ENCODE measurements at regions of chr1 and their contacts with region 1.

Region 1: DNA sequence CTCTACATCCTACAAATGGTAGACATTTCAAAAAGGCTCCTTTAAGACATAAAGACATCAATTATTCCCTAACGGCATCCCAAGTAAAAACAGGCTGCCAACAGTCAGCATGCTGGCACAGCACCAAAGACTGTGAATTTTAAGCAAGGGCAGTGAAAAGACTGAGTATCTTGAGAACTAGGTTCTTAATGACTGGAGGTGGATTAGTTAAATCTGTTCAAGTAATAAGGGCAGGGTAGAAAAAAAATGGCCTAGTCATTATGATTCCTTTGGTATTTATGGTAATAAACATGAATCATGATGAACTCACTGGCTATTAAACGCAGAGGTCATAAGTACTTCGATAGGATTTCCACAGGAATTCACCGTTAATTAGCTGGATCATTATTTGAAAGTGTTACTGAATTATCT is 75.2 kb downstream of the KIFAP3 start:
- DNase-seq: peak in 1 of 2 experiments; percentile 65
- H3K4me3 ChIP-seq: no peak overlapping the region
- H3K27ac ChIP-seq: peak overlapping the region; percentile 40
- H3K4me1 ChIP-seq: peaks cover 9% of the 10 kb centered on the region
- H3K27me3 ChIP-seq: no peaks in the 10 kb centered on the region
- CTCF ChIP-seq: no peak

Region 2: GRCh38 chr1:170020859-170021258 is 21.5 kb after region 1 on chr1:
- CTCF ChIA-PET with region 1: no interaction called
- POLR2A ChIA-PET with region 1: no interaction called
- intact Hi-C with region 1: no loop called
- DNase-seq: no peak
- H3K4me3 ChIP-seq: no peak overlapping the region
- H3K27ac ChIP-seq: no peak overlapping the region
- H3K4me1 ChIP-seq: no peaks in the 10 kb centered on the region
- H3K27me3 ChIP-seq: no peaks in the 10 kb centered on the region
- CTCF ChIP-seq: no peak

Region 3: DNA sequence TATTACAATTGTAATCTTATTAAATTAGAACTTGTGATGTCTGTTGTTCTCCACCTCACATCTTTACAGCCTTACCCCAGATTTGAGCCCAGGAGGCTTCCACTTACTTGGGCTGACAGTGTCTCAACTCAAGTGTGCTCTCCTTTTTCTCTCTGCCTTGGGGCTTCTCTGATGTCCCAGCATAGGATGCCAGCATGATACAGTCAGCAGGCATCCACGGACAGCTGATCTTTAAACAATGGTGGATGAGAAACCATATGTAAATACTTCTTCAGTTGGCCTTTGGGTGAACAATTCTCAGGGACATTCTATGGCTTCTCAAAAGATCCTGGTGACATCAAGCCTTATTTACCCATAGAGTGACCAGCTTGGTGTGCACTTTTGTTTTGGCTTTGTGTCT is 425.0 kb after region 1 on chr1:
- CTCF ChIA-PET with region 1: no interaction called
- POLR2A ChIA-PET with region 1: interaction called, 14 read pairs
- intact Hi-C with region 1: no loop called
- DNase-seq: no peak
- H3K4me3 ChIP-seq: no peak overlapping the region
- H3K27ac ChIP-seq: no peak overlapping the region
- H3K4me1 ChIP-seq: no peaks in the 10 kb centered on the region
- H3K27me3 ChIP-seq: peaks cover 3% of the 10 kb centered on the region; the same call in 1 of the 2 replicates
- CTCF ChIP-seq: no peak